ENCODE measurements at regions of chr17 and their contacts with region 1.

Region 1: GRCh38 chr17:34361478-34362061 is 1.5 kb downstream of the CCL1 start:
- DNase-seq: peak; percentile 85
- H3K4me3 Mint-ChIP-seq: no peak overlapping the region
- H3K27ac Mint-ChIP-seq: no peak overlapping the region
- H3K4me1 Mint-ChIP-seq: peaks cover 7% of the 10 kb centered on the region
- H3K27me3 Mint-ChIP-seq: peaks cover 26% of the 10 kb centered on the region

Region 2: DNA sequence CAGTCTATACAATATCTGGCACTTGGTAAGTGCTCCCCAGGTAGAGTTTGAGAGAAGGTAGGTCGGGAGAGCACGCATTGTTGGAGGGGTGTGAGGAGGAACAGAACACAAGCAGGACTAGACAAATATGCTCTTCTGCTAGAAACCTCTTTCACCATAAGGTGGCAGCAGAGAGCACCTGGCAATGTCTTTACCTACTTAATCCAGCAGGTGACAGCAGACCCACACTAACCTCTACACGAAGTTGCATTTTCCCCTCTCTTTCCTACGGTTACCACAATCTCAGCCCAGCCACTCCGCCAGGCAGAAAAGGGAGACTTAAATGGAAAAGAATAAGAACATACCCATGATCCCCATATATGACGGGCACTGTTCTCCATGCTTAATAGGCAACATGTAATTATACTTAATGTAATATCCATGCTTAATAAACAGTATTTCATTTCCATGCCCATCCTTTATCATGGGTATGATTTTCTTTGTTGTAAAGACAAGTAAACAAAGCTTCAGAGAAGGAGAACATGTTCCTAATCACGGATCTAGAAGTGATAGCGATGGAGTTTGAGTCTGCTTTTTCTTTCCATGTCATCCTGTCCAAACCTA is 161.5 kb before region 1 on chr17:
- CTCF ChIA-PET with region 1: interaction called, 358 read pairs
- POLR2A ChIA-PET with region 1: interaction called, 18 read pairs
- intact Hi-C with region 1: loop called (anchors 1 kb)
- DNase-seq: peak; percentile 73
- H3K4me3 Mint-ChIP-seq: no peak overlapping the region
- H3K27ac Mint-ChIP-seq: no peak overlapping the region
- H3K4me1 Mint-ChIP-seq: peaks cover 9% of the 10 kb centered on the region
- H3K27me3 Mint-ChIP-seq: peaks cover 44% of the 10 kb centered on the region

Region 3: GRCh38 chr17:34218748-34219147 is 142.8 kb before region 1 on chr17:
- CTCF ChIA-PET with region 1: interaction called, 11 read pairs
- POLR2A ChIA-PET with region 1: no interaction called
- intact Hi-C with region 1: no loop called
- DNase-seq: no peak
- H3K4me3 Mint-ChIP-seq: no peak overlapping the region
- H3K27ac Mint-ChIP-seq: no peak overlapping the region
- H3K4me1 Mint-ChIP-seq: no peaks in the 10 kb centered on the region
- H3K27me3 Mint-ChIP-seq: peaks cover 59% of the 10 kb centered on the region

Region 4: GRCh38 chr17:34378664-34379101 is 17.1 kb after region 1 on chr17:
- CTCF ChIA-PET with region 1: interaction called, 46 read pairs
- POLR2A ChIA-PET with region 1: no interaction called
- intact Hi-C with region 1: no loop called
- DNase-seq: peak; percentile 43
- H3K4me3 Mint-ChIP-seq: no peak overlapping the region
- H3K27ac Mint-ChIP-seq: no peak overlapping the region
- H3K4me1 Mint-ChIP-seq: peaks cover 50% of the 10 kb centered on the region
- H3K27me3 Mint-ChIP-seq: peaks cover 26% of the 10 kb centered on the region

Region 5: DNA sequence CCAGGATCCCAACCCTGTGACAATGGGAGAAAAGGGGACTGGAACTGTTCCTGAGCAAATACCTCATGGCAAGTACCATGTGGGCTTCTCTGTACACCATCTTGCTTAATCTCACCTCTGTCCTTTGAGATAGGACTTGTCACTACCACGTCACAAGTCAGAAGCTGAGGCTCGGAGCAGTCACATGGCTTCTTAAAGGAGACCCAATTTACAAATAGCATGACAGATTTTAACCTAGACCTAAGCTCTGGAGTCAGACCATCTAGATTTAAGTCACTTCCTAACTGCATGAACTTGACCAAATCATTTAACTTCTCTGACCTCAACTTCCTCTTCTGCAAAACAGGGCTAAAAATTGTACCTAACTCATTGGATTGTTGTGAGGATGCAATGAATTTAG is 37.4 kb after region 1 on chr17:
- CTCF ChIA-PET with region 1: interaction called, 26 read pairs
- POLR2A ChIA-PET with region 1: no interaction called
- intact Hi-C with region 1: no loop called
- DNase-seq: no peak
- H3K4me3 Mint-ChIP-seq: no peak overlapping the region
- H3K27ac Mint-ChIP-seq: no peak overlapping the region
- H3K4me1 Mint-ChIP-seq: no peaks in the 10 kb centered on the region
- H3K27me3 Mint-ChIP-seq: peaks cover 19% of the 10 kb centered on the region

Measured in activated CD4-positive, alpha-beta memory T cell treated with anti-CD3 and anti-CD28 coated beads for 36 hours (primary cell).